GM12878 (cell line): ENCODE measurements at regions of chr14 and their contacts with region 1.

Region 1: DNA sequence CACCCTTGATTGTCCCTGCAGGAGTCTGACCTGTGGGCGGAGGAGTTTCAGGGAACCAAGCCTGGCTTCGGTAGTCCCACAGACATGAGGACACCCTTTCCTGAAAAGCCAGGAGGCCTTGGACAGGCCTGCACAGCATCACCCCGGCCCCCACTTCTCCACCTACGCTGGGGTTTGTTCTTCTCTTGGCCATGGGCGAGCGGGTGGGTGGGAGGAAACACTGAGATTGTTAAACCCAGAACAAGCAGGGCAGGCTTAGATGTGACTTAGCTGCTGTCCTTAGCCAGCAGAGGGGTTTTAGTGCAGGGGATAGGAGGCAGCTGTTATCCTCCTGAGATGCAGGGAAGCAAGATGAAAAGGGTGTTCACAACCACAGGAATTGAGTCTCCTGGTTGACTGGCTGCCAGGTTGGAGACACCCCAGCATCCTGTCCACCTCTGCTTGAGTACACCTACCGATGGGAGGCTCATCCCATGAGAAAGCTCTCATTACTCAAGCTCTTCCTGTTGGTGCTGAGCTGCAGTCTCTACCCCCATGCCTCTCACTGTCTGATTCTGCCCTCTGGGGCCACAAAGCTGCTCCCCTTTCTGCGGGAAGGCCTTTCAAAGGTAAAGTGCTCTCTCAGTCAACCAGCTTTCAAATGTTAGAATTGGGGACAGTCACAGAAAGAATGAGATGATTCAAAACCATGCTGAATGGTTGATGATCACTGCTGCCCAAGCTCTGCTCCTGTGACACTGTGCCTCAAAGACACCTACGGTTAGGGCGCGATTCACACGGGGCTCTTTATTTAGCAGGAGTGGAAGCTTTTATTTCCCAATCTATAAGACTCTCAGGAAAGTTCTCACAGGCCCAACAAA is 86.3 kb downstream of the IRF2BPL start:
- DNase-seq: peak; percentile 72
- ATAC-seq: peak; percentile 29
- H3K4me3 ChIP-seq: no peak overlapping the region
- H3K27ac ChIP-seq: no peak overlapping the region
- H3K4me1 ChIP-seq: peaks cover 21% of the 10 kb centered on the region
- H3K27me3 ChIP-seq: no peaks in the 10 kb centered on the region
- CTCF ChIP-seq: no peak; a peak in 1 of 6 replicates
- EP300 ChIP-seq: no peak
- POLR2A ChIP-seq: no peak
- RAD21 ChIP-seq: no peak

Region 2: DNA sequence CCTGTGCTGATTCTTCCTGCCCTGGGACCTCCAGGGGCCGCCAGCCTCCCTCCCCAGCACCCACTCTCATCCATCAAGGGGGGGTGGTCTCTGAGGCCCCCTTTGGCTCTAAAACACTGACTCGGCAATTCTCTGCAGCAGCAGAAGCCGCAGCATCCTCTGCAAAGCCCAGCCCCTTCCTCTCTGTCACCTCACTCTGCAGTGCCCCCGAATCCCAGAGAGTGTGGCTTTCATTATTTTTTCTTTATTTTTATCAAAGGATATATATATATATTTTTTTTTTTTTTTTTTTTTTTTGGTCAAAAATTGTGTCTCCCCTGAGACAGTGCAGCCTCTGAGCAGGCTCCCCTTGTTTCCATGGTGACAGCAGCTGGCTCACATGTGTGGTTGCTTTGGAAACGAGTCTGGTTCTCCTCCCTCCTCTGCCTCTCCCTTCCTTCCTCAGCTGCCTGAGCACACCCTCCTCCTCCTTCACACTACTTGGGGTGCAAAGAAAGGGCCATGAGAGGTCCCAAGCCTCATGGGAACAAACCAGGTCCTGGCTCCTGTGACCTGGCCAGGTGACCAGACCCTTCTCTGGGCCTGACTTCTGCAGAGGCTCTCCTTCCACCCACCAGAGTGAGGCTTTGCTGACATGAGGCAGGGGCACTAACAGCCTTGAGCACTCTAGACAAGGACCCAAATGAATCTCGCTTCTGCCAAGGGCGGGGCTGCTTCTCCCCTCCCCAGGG is 15.5 kb before region 1 on chr14:
- CTCF ChIA-PET with region 1: interaction called, 189 read pairs
- POLR2A ChIA-PET with region 1: interaction called, 53 read pairs
- RAD21 ChIA-PET with region 1: interaction called, 233 read pairs
- SMC1A ChIA-PET with region 1: interaction called, 233 read pairs
- in situ Hi-C with region 1: no loop called
- intact Hi-C with region 1: no loop called
- DNase-seq: no peak
- ATAC-seq: peak; percentile 85
- H3K4me3 ChIP-seq: no peak overlapping the region
- H3K27ac ChIP-seq: no peak overlapping the region
- H3K4me1 ChIP-seq: peaks cover 18% of the 10 kb centered on the region
- H3K27me3 ChIP-seq: no peaks in the 10 kb centered on the region
- CTCF ChIP-seq: no peak
- EP300 ChIP-seq: no peak
- POLR2A ChIP-seq: no peak
- RAD21 ChIP-seq: no peak

Region 3: DNA sequence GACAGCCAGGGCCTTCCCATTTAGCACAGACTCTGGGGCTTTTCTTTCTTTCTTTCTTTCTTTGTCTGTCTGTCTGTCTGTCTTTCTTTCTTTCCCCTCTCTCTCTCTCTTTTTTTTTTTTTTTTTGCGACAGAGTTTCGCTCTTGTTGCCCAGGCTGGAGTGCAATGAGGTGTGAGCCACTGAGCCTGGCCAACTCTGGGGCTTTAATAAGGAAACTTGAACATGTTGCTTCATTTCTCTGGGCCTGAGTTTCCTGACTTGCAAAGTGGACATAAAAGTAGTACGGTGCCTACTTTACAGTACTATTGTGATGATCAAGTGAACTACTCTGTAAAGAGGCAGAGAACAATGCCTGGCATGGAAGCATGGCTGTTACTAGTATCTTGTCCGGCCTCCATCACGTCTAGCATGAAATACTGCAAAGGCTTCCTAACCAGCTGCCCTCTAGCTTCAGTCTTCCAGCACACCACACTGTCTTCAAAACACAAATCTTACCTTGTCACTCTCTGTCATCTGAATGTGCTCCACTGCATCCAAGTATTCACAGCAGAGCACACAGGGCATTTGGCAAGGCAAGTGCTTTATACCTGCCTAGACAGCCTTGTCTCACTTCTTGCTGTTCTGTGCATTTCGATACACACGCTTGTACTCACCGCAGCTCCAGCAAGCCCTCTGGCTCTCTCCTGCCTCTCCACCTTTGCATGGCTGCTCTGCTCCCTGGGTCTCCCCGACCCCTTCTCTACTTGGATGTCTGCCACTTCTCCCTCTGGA is 10.4 kb before region 1 on chr14:
- CTCF ChIA-PET with region 1: interaction called, 3 read pairs
- POLR2A ChIA-PET with region 1: interaction called, 39 read pairs
- RAD21 ChIA-PET with region 1: interaction called, 35 read pairs
- SMC1A ChIA-PET with region 1: interaction called, 57 read pairs
- in situ Hi-C with region 1: no loop called
- intact Hi-C with region 1: no loop called
- DNase-seq: no peak
- ATAC-seq: no peak
- H3K4me3 ChIP-seq: no peak overlapping the region
- H3K27ac ChIP-seq: no peak overlapping the region
- H3K4me1 ChIP-seq: peaks cover 16% of the 10 kb centered on the region
- H3K27me3 ChIP-seq: no peaks in the 10 kb centered on the region
- CTCF ChIP-seq: no peak
- EP300 ChIP-seq: no peak
- POLR2A ChIP-seq: no peak
- RAD21 ChIP-seq: no peak

Region 4: DNA sequence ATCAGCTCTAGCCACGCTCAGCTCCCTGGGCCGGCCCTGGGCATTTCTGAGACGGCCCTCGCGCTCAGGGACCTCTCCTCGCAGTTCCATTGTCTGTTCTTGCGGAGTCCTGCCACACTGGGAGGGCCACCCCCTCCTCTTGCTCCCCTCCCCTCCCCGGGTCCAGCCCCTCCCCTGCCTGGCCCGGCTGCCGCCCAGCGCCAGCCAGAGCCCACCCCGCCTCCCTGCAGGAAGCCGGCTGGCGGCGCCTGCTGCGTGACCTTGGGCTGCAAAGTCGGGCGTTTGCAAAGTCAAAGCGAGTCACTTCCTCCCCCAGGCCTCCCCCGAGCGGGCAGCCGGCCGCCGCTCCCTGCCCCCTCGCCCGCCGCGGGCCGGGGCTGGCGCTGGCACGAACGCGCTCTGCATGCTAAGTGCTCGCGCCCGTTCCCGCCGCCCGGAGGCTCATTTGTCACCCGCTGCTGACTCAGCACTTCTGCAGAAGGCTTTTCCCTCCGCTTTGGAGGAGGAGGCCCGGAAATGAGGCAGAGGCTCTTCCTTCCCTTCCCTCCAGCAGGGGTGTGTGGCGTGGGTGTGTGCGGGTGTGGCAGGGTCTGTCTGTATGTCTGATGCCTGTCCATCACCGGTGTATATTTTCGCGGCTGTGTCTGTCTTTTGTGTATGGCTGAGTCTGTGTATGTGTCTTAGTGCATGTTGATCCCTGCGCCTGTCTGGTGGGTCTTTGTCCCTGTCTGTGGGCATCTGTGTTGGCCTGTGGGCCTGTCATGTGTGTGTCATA is 14.3 kb after region 1 on chr14:
- CTCF ChIA-PET with region 1: interaction called, 21 read pairs
- POLR2A ChIA-PET with region 1: interaction called, 95 read pairs
- RAD21 ChIA-PET with region 1: interaction called, 285 read pairs
- SMC1A ChIA-PET with region 1: interaction called, 179 read pairs
- in situ Hi-C with region 1: no loop called
- intact Hi-C with region 1: loop called (anchors 2 kb)
- DNase-seq: no peak
- ATAC-seq: peak; percentile 49
- H3K4me3 ChIP-seq: peak overlapping the region; percentile 68
- H3K27ac ChIP-seq: peak overlapping the region; percentile 100
- H3K4me1 ChIP-seq: peaks cover 73% of the 10 kb centered on the region
- H3K27me3 ChIP-seq: no peaks in the 10 kb centered on the region
- CTCF ChIP-seq: no peak
- EP300 ChIP-seq: peak; percentile 18 to 69; a peak in 2 of 4 replicates
- POLR2A ChIP-seq: peak; percentile 62
- RAD21 ChIP-seq: no peak

Region 5: DNA sequence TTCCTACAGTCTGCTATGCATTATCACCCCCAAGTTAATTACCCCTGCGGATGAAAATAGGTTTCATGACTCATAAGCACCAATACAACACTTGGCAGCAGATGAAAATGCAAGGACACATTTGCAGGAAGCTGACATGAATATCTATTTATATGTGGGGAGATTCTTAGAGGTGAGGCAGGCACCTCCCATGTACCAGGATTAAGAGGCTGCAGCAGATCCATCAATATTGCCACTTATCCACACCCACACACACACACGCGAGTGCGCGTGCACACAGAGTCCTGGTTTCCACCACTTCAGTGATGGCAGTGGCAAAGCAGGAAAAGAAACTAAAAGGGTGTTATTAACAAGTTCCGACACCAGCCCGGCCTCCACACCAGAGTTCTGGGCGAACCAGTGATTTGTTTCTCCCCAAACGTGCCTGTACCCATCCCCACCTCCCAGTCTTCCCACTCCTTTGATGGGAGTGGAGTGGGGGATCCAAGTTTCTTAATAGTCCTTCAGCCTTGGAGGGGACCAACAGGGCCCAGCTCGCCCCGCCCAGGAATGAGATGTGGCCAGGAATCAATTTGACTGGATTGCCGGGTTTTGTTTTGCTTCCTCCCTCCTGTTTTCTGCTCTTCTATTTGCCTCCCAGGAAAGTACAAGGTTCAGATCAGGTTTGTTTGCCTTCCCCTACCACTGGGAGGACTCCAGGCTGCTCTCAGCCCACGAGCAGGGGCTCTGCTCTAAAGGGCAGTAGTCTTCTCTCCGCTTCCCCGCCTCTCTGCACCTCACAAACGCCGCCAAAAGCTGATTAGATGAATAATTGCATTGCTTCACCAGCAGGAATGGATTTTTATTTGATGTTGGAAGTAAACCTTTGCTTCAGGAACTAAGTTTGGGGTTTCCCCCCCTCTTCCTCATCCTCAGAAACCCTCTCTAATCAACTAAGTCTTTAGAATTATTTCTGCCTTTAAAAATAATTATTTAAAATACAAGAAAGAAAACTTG is 81.1 kb after region 1 on chr14:
- CTCF ChIA-PET with region 1: interaction called, 14 read pairs
- POLR2A ChIA-PET with region 1: interaction called, 12 read pairs
- RAD21 ChIA-PET with region 1: interaction called, 20 read pairs
- SMC1A ChIA-PET with region 1: interaction called, 5 read pairs
- in situ Hi-C with region 1: no loop called
- intact Hi-C with region 1: no loop called
- DNase-seq: no peak
- ATAC-seq: peak; percentile 7
- H3K4me3 ChIP-seq: no peak overlapping the region
- H3K27ac ChIP-seq: peak overlapping the region; percentile 56
- H3K4me1 ChIP-seq: peaks cover 51% of the 10 kb centered on the region
- H3K27me3 ChIP-seq: no peaks in the 10 kb centered on the region
- CTCF ChIP-seq: 0 out of 6 replicates have a peak, but pooled peaks of 2 of the 3 experiments have one; percentile 2 to 14
- EP300 ChIP-seq: no peak
- POLR2A ChIP-seq: no peak
- RAD21 ChIP-seq: no peak

Region 6: DNA sequence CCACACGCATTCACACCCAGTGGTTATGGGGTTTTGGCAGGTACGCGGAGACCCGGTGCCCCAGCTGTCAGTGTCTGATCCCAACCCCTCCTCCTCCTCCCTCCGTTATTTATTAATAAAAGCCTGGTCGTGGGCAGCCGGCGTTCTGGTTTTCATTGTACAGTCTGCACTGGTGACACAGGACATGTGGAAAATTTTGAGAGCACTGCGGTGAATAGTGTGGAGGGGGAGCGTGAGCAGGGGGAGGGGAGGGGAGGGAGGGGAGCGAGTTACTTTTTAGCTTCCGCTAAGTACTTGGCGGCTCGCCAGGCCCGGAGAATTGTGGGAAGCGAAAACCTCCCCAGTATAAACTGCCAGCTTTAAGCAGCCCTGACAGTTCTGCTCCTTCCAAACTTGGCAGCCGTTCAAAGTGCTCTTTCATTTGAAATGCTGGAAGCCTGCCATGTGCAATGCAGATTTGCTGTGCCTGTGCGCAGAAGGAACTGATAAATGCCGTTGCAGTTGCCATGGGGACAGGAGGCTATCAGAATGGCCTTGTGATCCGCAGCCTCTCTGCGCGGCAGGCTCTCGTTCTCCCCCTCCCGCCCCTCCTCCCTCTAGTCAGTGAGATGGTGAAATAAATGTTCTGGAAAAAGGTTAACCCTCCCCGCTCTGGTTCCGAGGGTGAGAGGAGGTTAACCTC is 98.0 kb after region 1 on chr14:
- CTCF ChIA-PET with region 1: interaction called, 17 read pairs
- POLR2A ChIA-PET with region 1: interaction called, 9 read pairs
- RAD21 ChIA-PET with region 1: interaction called, 19 read pairs
- SMC1A ChIA-PET with region 1: interaction called, 37 read pairs
- in situ Hi-C with region 1: no loop called
- intact Hi-C with region 1: loop called (anchors 1 kb)
- DNase-seq: peak; percentile 99
- ATAC-seq: peak; percentile 75
- H3K4me3 ChIP-seq: peak overlapping the region; percentile 50
- H3K27ac ChIP-seq: peak overlapping the region; percentile 93
- H3K4me1 ChIP-seq: peaks cover 87% of the 10 kb centered on the region
- H3K27me3 ChIP-seq: no peaks in the 10 kb centered on the region
- CTCF ChIP-seq: no peak
- EP300 ChIP-seq: peak; percentile 42 to 61
- POLR2A ChIP-seq: peak; percentile 55; the same call in 1 of the 2 replicates
- RAD21 ChIP-seq: no peak